HepG2 (cell line): ENCODE measurements at regions of chr1 and their contacts with region 1.

Region 1: GRCh38 chr1:157056269-157056668 is 10.7 kb upstream of the ARHGEF11 start:
- DNase-seq: no peak
- ATAC-seq: no peak
- H3K4me3 ChIP-seq: no peak overlapping the region
- H3K27ac ChIP-seq: no peak overlapping the region
- H3K4me1 ChIP-seq: peaks cover 23% of the 10 kb centered on the region
- H3K27me3 ChIP-seq: no peaks in the 10 kb centered on the region
- CTCF ChIP-seq: no peak
- EP300 ChIP-seq: no peak
- POLR2A ChIP-seq: no peak
- RAD21 ChIP-seq: no peak

Region 2: GRCh38 chr1:157045251-157046218 is 10.7 kb before region 1 on chr1 and contains the start of gene ARHGEF11:
- CTCF ChIA-PET with region 1: no interaction called
- POLR2A ChIA-PET with region 1: interaction called, 5 read pairs
- in situ Hi-C with region 1: no loop called
- intact Hi-C with region 1: loop called (anchors 1 kb)
- DNase-seq: peak; percentile 76
- ATAC-seq: peak; percentile 92
- H3K4me3 ChIP-seq: peak within 1 kb of the TSS; percentile 83 to 94 (median 88)
- H3K27ac ChIP-seq: peak within 1 kb of the TSS; percentile 95
- H3K4me1 ChIP-seq: peaks cover 49% of the 10 kb centered on the region
- H3K27me3 ChIP-seq: no peaks in the 10 kb centered on the region; a peak in 1 of 5 replicates
- CTCF ChIP-seq: no peak; the same call in 1 of the 2 replicates
- EP300 ChIP-seq: no peak
- POLR2A ChIP-seq: peak; percentile 57 to 63; a peak in 3 of 4 replicates
- RAD21 ChIP-seq: peak; percentile 23; the same call in 1 of the 2 replicates
- total RNA-seq, gene ARHGEF11: 16.0 and 21.2 TPM in 2 replicates

Region 3: DNA sequence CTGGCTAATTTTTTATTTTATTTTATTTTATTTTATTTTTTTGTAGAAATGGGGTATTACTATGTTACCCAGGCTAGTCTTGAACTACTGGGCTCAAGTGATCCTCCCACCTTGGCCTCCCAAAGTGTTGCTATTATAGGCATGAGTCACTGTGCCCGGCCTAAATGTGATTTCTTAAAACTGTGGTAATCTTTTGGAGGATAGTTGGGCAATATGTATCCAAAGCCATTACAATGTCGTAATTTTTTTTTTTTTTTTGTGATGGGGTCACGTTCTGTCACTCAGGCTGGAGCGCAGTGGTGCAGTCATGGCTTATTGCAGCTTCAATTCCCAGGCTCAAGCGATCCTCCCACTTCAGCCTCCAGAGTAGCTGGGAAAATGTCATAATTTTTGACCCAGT is 29.2 kb after region 1 on chr1:
- CTCF ChIA-PET with region 1: no interaction called
- POLR2A ChIA-PET with region 1: no interaction called
- in situ Hi-C with region 1: no loop called
- intact Hi-C with region 1: no loop called
- DNase-seq: no peak
- ATAC-seq: no peak
- H3K4me3 ChIP-seq: no peak overlapping the region
- H3K27ac ChIP-seq: no peak overlapping the region
- H3K4me1 ChIP-seq: peaks cover 17% of the 10 kb centered on the region
- H3K27me3 ChIP-seq: peaks cover 0 to 2% of the 10 kb centered on the region in 2 experiments; a peak in 2 of 5 replicates
- CTCF ChIP-seq: no peak
- EP300 ChIP-seq: no peak
- POLR2A ChIP-seq: no peak
- RAD21 ChIP-seq: no peak